Activated naive CD4-positive, alpha-beta T cell treated with anti-CD3 and anti-CD28 coated beads for 36 hours (primary cell): ENCODE measurements at regions of chr6 and their contacts with region 1.

Region 1: GRCh38 chr6:118283766-118284165 is 264.3 kb upstream of the PLN start:
- DNase-seq: peak; percentile 69
- H3K4me3 Mint-ChIP-seq: no peak overlapping the region
- H3K27ac Mint-ChIP-seq: no peak overlapping the region
- H3K4me1 Mint-ChIP-seq: peaks cover 2% of the 10 kb centered on the region
- H3K27me3 Mint-ChIP-seq: peaks cover 3% of the 10 kb centered on the region

Region 2: DNA sequence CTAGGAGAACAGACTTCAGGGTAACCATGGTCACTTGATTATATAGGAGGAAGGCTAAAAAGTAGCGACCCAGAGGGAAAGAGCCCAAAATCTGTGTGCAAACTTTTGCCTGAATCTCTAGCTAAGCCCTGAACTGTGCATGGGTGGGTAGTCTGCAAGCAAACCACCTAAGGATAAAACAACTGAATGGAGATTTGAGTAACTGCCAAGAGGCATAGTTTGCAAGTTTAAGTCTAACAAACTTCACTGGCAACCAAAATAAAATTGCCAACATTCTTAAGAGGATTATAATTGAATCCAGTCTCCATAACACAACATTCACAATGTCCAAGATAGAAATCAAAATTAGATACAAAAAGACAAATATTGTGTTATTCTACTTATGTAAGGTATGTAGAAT is 72.3 kb after region 1 on chr6:
- CTCF ChIA-PET with region 1: no interaction called
- intact Hi-C with region 1: loop called (anchors 5 kb)
- DNase-seq: no peak
- H3K4me3 Mint-ChIP-seq: no peak overlapping the region
- H3K27ac Mint-ChIP-seq: no peak overlapping the region
- H3K4me1 Mint-ChIP-seq: no peaks in the 10 kb centered on the region
- H3K27me3 Mint-ChIP-seq: no peaks in the 10 kb centered on the region

Region 3: DNA sequence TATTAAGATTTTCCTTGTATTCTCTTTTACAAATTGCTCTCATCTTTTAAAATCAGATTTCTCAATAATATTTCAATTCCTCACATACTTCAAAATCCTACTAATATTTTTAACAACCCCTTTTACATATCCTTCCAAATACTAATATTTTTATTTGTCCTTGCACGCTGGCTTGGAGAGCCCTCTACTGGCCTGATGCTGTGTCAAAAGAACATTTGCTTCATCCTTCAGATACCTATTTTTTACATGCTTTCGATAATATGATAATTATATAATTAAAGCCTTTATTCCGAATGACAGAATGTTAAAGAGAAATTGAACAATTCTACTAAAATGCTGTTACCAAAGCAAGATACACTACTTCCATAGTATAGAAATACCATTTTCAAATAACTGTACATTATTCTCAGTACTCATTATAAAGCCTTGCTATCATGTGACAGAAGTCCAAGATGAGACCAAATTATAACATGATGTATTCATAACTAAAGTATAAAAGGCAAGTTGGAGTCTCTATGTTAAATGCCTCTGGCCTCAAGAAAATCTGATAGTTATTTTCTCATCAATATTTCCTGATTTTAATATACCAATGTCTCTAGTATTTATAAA is 225.3 kb after region 1 on chr6:
- CTCF ChIA-PET with region 1: no interaction called
- intact Hi-C with region 1: loop called (anchors 1 kb)
- DNase-seq: peak; percentile 31
- H3K4me3 Mint-ChIP-seq: no peak overlapping the region
- H3K27ac Mint-ChIP-seq: no peak overlapping the region
- H3K4me1 Mint-ChIP-seq: peaks cover 9% of the 10 kb centered on the region
- H3K27me3 Mint-ChIP-seq: no peaks in the 10 kb centered on the region

Region 4: DNA sequence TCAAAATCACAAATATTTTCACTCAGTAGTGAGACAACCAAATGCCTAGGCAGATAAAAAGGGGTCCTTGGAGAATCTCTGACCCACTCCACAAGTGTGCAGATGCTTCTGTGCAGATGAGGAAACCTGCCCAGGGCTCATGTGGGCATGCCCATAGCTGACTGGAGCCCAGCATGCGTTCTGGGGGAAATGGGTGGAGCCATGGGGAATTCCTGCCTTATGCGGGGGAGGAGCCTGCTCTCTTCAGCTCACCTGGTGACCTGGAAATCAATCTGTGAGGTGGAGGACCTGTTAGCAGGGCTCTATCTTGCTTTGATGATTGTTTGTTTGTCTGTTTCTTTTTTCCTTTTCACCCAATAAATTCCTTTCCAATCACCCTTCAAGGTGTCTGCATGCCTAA is 240.9 kb after region 1 on chr6:
- CTCF ChIA-PET with region 1: no interaction called
- intact Hi-C with region 1: no loop called
- DNase-seq: peak; percentile 14
- H3K4me3 Mint-ChIP-seq: no peak overlapping the region
- H3K27ac Mint-ChIP-seq: peak overlapping the region; percentile 41
- H3K4me1 Mint-ChIP-seq: peaks cover 32% of the 10 kb centered on the region
- H3K27me3 Mint-ChIP-seq: no peaks in the 10 kb centered on the region

Region 5: GRCh38 chr6:118537574-118537973 is 253.8 kb after region 1 on chr6:
- CTCF ChIA-PET with region 1: no interaction called
- intact Hi-C with region 1: no loop called
- DNase-seq: no peak
- H3K4me3 Mint-ChIP-seq: no peak overlapping the region
- H3K27ac Mint-ChIP-seq: no peak overlapping the region
- H3K4me1 Mint-ChIP-seq: peaks cover 33% of the 10 kb centered on the region
- H3K27me3 Mint-ChIP-seq: no peaks in the 10 kb centered on the region

Region 6: DNA sequence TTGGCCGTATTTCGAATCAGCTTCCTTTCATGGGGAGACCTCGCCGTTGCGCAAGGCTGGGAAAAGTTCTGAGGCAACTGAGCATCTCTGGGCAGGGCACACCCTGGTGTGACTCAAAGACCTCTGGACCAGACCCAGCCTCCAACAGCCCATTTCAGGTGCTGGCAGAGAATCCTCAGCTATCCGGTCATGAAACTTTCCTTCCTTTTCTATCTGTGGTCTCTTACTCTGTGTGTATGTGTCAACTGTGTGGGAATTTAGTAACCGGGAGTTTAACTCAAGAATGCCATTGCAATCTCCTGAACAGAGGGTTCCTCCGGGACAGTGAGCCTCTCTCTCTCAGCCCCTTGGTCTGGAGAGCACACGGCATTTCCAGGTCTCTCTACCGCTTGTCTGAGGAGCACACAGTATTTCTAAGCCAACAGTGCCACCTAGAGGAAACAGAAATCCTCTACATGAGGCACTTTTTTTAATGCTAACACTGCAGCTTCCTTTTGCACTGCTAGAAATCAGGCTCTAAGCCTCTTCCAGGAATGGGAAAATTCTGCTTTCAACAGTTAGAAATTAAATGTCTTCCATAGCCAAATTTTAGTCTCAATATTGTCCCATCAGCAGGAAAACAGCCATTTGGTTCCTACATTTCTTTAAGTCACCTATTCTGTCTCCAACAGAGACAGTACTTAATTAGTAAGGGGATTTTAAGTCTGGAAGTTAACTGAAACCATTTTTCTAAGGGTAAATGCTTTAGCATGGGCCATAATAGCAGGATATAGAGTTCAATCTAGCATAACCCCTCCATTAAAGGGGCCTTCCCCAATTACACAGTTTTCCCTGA is 297.0 kb after region 1 on chr6:
- CTCF ChIA-PET with region 1: interaction called, 7 read pairs
- intact Hi-C with region 1: loop called (anchors 1 kb)
- DNase-seq: peak; percentile 26
- H3K4me3 Mint-ChIP-seq: no peak overlapping the region
- H3K27ac Mint-ChIP-seq: peak overlapping the region; percentile 58
- H3K4me1 Mint-ChIP-seq: peaks cover 2% of the 10 kb centered on the region
- H3K27me3 Mint-ChIP-seq: no peaks in the 10 kb centered on the region

Region 7: GRCh38 chr6:118618679-118619377 is 335.1 kb after region 1 on chr6:
- CTCF ChIA-PET with region 1: interaction called, 4 read pairs
- intact Hi-C with region 1: loop called (anchors 1 kb)
- DNase-seq: peak; percentile 81
- H3K4me3 Mint-ChIP-seq: no peak overlapping the region
- H3K27ac Mint-ChIP-seq: no peak overlapping the region
- H3K4me1 Mint-ChIP-seq: peaks cover 50% of the 10 kb centered on the region
- H3K27me3 Mint-ChIP-seq: no peaks in the 10 kb centered on the region

Region 8: DNA sequence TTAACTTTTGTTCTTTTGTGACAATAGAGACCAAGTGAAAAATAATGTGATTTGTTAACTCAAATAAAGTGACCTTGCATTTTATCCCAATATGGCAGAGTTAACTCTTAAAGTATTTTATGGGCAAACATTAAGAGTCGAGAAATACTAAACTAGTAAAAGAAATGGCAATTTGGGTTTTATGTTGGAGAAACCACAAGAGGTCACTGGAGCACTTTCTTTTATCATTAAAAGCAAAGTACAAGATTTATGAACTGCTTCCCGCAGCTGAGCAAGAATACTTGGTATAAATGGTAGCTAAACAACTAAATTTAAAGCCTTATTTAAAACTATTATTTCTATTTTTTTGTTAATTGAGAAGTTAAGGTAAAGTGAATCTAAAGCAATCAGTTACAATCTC is 684.6 kb after region 1 on chr6:
- CTCF ChIA-PET with region 1: no interaction called
- intact Hi-C with region 1: loop called (anchors 5 kb)
- DNase-seq: no peak
- H3K4me3 Mint-ChIP-seq: no peak overlapping the region
- H3K27ac Mint-ChIP-seq: no peak overlapping the region
- H3K4me1 Mint-ChIP-seq: no peaks in the 10 kb centered on the region
- H3K27me3 Mint-ChIP-seq: no peaks in the 10 kb centered on the region